Right cardiac atrium (tissue), 5 donors: ENCODE measurements at regions of chr3 and their contacts with region 1.

Region 1: DNA sequence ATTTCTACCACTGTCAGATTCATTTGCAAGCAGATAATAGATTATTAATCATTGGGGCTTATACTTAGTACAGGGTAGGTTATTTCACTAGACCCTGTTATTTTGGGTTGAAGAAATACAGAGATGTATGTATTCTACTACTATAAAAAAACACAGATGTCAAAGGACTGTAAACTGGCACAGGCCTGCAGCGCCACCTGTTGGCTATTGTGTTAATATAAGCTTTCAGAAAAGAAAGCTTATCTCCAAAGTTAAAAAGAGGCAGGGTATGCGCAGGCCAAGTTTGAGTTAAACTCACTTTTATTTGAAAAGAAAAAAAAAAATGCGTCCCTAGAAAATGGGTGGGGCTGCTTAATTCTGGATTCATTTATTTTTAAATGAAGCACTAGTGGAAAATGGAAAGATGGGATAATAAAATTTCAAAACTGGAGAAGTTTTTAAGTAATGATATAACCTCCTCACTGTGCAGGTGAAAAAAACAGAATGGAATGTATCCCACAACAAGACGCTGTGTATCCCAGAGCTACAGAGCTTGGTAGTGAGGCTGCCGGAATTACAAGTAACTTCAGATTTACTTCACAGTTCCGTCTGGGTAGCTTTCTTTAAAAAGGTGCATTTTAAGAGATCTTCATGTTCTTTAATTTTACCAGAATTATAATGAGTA is 407.2 kb upstream of the TGFBR2 start:
- DNase-seq: peak; percentile 75 to 90 (median 83)
- ATAC-seq: peak; percentile 50 to 69
- H3K4me3 ChIP-seq: no peak overlapping the region
- H3K27ac ChIP-seq: no peak overlapping the region
- H3K4me1 ChIP-seq: peaks cover 4% of the 10 kb centered on the region
- H3K27me3 ChIP-seq: no peaks in the 10 kb centered on the region

Region 2: DNA sequence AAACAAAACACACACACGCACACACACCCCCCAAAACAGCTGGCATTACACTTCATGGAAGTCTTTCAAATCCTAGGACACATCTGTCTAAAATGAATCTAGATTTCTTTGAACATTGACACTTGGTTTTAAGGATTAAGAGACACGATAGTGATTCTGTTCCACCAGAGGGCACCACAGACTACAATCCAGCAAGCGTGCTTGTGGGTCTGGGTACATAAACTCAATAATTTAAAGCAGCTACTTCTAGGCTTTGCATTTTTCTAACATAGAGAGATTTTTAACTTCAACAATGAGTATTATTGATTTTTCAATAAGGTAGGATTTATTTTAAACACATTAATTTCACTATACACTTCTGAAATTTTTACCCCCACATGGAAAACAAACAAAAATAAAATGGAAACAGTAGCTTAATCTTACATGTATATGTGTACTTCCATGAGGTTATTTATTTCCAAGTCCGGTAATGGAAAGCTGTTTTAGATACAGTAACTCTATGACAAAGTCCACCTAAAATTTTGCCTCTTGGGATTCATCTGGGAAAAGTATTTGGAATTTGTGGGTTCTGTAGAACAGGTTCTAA is 156.9 kb before region 1 on chr3:
- intact Hi-C with region 1: loop called in 3 of 4 experiments (anchors 2 to 5 kb)
- DNase-seq: peak; percentile 41 to 64 (median 56)
- ATAC-seq: peak; percentile 66 to 72
- H3K4me3 ChIP-seq: no peak overlapping the region
- H3K27ac ChIP-seq: no peak overlapping the region
- H3K4me1 ChIP-seq: no peaks in the 10 kb centered on the region
- H3K27me3 ChIP-seq: no peaks in the 10 kb centered on the region

Region 3: DNA sequence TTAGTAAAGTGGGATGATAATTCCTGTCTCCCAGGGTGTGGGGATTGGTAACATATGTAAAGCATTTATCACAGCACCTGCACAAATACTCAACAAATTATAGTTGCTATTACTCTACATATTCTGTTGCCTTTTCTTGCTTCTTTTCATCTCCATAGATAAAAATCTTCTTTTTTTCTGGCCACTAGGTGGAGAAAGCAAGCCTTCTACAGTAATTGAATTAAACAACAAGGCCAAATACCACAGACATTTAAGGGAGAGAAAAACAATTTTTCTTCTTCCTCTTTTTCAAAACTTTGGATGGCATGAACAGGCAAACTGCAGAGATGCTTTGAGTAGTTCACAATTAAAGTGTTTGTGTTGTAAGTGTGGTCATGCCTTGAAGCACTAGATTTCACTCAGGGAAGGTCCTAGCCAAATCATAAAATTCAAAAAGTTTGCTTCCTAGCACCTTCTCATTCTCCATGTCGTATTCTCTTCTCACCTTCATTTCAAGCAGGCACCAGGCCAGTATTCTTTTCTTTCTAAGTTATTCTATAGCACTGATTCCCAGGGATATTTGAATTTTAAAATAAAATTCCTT is 86.2 kb before region 1 on chr3:
- intact Hi-C with region 1: loop called in 2 of 4 experiments (anchors 5 kb)
- DNase-seq: no peak
- ATAC-seq: peak; percentile 39 to 62
- H3K4me3 ChIP-seq: no peak overlapping the region
- H3K27ac ChIP-seq: no peak overlapping the region
- H3K4me1 ChIP-seq: no peaks in the 10 kb centered on the region
- H3K27me3 ChIP-seq: no peaks in the 10 kb centered on the region

Region 4: DNA sequence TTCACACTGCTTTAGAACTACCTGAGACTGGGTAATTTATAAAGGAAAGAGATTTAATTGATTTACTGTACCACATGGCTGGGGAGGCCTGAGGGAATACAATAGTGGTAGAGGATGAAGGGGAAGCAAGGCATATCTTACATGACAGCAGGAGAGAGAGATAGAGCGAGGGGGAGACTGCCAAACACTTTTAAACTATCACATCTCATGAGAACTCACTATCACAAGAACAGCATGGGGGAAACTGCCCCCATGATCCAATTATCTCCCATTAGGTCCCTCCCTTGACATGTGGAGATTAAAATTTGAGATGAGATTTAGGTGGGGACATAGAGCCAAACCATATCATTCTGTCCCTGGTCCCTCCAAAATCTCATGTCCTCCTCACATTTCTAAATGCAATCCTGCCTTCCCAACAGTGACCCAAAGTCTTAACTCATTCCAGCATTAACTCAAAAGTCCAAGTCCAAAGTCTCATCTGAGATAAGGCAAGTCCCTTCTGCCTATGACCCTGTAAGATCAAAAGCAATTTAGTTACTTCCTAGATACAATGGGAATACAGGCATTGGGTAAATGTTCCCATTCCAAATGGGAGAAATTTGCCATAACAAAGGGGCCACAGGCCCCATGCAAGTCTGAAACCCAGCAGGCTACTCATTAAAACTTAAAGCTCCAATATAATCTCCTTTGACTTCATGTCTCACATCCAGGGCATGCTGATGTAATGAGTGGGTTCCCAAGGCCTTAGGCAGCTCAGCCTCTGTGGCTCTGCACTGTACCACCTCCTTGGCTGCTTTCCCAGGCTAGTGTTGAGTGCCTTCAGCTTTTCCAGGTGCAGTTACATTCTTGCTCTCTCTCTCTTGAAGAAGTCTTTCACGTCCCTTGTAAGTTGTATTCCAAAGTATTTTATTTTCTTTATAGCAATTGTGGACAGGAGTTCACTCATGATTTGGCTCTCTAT is 74.5 kb before region 1 on chr3:
- intact Hi-C with region 1: loop called in 2 of 4 experiments (anchors 5 kb)
- DNase-seq: peak in 1 of 3 donors; percentile 40
- ATAC-seq: no peak
- H3K4me3 ChIP-seq: no peak overlapping the region
- H3K27ac ChIP-seq: no peak overlapping the region
- H3K4me1 ChIP-seq: no peaks in the 10 kb centered on the region
- H3K27me3 ChIP-seq: no peaks in the 10 kb centered on the region

Region 5: GRCh38 chr3:30135190-30135589 is 64.0 kb before region 1 on chr3:
- intact Hi-C with region 1: loop called in 1 of 4 experiments (anchors 10 kb)
- DNase-seq: peak in 1 of 3 donors; percentile 46
- ATAC-seq: peak in 1 of 2 donors; percentile 72
- H3K4me3 ChIP-seq: no peak overlapping the region
- H3K27ac ChIP-seq: no peak overlapping the region
- H3K4me1 ChIP-seq: no peaks in the 10 kb centered on the region
- H3K27me3 ChIP-seq: no peaks in the 10 kb centered on the region

Region 6: DNA sequence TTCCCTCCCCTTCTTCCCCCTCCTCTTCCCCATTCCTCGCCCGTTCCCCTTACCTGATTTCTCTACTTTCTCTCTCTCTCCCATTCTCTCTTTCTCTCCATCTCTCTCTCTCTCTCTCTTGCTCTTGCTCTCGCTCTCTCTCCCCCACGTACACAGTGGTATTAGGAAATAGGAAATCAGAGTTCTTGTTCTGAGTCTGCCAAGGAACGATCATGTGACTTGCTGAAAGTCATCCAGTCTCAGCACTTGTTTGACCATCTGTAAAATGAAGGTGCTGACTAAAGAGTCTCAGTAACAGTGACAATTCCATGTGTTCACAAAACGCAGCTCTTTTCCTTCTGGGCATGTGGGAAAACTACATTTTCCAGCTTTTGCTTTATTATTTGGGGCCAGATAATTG is 37.9 kb before region 1 on chr3:
- intact Hi-C with region 1: no loop called
- DNase-seq: no peak
- ATAC-seq: peak; percentile 84 to 87
- H3K4me3 ChIP-seq: no peak overlapping the region
- H3K27ac ChIP-seq: no peak overlapping the region
- H3K4me1 ChIP-seq: peaks cover 2% of the 10 kb centered on the region
- H3K27me3 ChIP-seq: no peaks in the 10 kb centered on the region

Region 7: GRCh38 chr3:31027191-31027761 is 828.0 kb after region 1 on chr3:
- intact Hi-C with region 1: no loop called
- DNase-seq: no peak
- ATAC-seq: no peak
- H3K4me3 ChIP-seq: no peak overlapping the region
- H3K27ac ChIP-seq: no peak overlapping the region
- H3K4me1 ChIP-seq: no peaks in the 10 kb centered on the region
- H3K27me3 ChIP-seq: no peaks in the 10 kb centered on the region